CD8-positive, alpha-beta T cell (primary cell): ENCODE measurements at regions of chr14 and their contacts with region 1.

Region 1: GRCh38 chr14:90383075-90383730 is 13.6 kb upstream of the CALM1 start:
- DNase-seq: peak; percentile 94 to 99 (median 97)
- ATAC-seq: peak; percentile 77
- H3K4me3 ChIP-seq: peak overlapping the region; percentile 88 to 90
- H3K4me3 Mint-ChIP-seq: no peak overlapping the region
- H3K27ac ChIP-seq: peak overlapping the region; percentile 99 to 100
- H3K27ac Mint-ChIP-seq: no peak overlapping the region
- H3K4me1 ChIP-seq: peaks cover 23% of the 10 kb centered on the region
- H3K4me1 Mint-ChIP-seq: peaks cover 28% of the 10 kb centered on the region
- H3K27me3 ChIP-seq: no peaks in the 10 kb centered on the region
- H3K27me3 Mint-ChIP-seq: no peaks in the 10 kb centered on the region
- CTCF ChIP-seq: no peak

Region 2: DNA sequence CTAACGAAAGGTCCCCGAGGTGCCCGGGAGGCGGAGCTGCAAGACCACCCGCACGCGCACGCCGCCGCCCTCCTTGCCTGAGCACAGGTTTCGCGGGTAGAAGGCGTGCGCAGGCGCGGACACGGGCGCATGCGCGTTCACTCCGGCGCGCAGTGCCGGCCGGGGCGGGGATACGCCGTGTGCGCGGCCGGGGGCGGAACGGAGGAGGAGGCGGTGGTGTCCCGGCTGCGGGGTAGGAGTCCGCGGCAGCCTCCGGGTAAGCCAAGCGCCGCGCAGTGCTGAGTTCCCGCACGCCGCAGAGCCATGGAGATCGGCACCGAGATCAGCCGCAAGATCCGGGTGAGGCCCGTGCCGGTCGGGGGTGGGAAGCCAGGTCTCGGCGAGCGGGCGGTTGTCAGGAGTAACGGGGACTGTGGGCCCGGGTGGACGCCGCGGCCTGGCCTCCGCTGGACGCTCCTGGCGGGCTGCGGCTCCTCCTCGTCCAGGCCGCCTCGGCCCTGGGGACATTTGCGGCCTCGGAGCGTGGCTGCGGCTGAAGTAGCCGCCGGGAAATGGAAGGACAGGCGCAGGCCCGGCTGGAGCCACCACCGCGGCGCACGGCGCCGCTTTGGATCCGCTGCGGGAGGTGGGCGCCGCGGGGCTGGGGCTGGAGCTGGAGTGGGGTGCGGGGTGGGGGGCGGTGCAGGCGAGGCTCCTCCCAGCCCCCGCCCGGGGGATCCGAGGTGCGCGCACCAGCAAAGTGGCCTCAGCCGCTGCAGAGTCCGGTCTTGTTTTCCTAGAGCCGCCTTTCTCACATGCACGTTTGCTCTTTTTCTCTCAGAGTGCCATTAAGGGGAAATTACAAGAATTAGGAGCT is 1820.1 kb before region 1 on chr14 and contains the start of gene ZC3H14:
- CTCF ChIA-PET with region 1: no interaction called
- POLR2A ChIA-PET with region 1: no interaction called
- intact Hi-C with region 1: loop called (anchors 10 kb)
- DNase-seq: peak; percentile 69 to 94 (median 86)
- ATAC-seq: peak; percentile 95
- H3K4me3 ChIP-seq: peak within 1 kb of the TSS; percentile 75 to 91
- H3K4me3 Mint-ChIP-seq: peak within 1 kb of the TSS; percentile 96
- H3K27ac ChIP-seq: peak within 1 kb of the TSS; percentile 52 to 66
- H3K27ac Mint-ChIP-seq: peak within 1 kb of the TSS; percentile 91
- H3K4me1 ChIP-seq: peaks cover 20% of the 10 kb centered on the region
- H3K4me1 Mint-ChIP-seq: peaks cover 35% of the 10 kb centered on the region
- H3K27me3 ChIP-seq: no peaks in the 10 kb centered on the region
- H3K27me3 Mint-ChIP-seq: peaks cover 7% of the 10 kb centered on the region
- CTCF ChIP-seq: no peak
- total RNA-seq, gene ZC3H14: 36.3 to 39.3 TPM

Region 3: DNA sequence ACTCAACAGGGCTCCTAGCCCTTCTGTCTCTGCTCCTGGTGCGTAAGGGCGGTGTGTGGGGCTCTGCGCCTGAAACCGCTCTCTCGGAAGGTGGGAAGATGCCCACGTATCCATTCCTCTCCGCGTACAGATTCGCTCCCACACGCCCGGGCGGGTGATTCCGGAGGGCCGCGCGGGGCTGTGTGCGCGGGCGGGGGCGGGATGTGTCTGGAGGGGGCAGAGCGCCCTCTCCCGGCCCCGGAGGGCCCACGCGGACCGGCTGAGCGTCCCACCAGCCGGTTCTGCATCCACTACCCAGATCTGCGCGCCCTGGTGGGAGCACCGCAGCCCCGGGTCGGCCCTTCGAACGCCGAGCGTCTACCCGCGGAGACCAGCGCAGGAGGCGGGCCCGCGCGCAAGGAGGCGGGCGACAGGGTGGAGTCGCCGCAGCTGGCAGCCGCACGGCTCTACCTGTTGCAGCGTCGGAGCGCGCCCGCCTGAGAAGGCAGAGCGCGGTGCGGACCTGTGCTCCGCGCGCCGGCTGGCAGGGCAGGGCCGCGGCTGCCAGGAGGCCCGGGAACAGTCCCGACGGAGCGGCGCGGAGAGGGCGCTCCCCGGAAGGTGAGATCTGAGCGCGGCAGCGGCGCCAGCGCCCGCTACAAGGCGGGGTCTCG is 322.8 kb before region 1 on chr14:
- CTCF ChIA-PET with region 1: no interaction called
- POLR2A ChIA-PET with region 1: no interaction called
- intact Hi-C with region 1: no loop called
- DNase-seq: peak in 6 of 9 experiments; percentile 16 to 55 (median 26)
- ATAC-seq: peak; percentile 66
- H3K4me3 ChIP-seq: peak overlapping the region; percentile 29 to 35
- H3K4me3 Mint-ChIP-seq: peak overlapping the region; percentile 72
- H3K27ac ChIP-seq: no peak overlapping the region
- H3K27ac Mint-ChIP-seq: no peak overlapping the region
- H3K4me1 ChIP-seq: peaks cover 12% of the 10 kb centered on the region
- H3K4me1 Mint-ChIP-seq: peaks cover 26% of the 10 kb centered on the region
- H3K27me3 ChIP-seq: peaks cover 9% of the 10 kb centered on the region in 2 experiments
- H3K27me3 Mint-ChIP-seq: peaks cover 59% of the 10 kb centered on the region
- CTCF ChIP-seq: peak; percentile 20

Region 4: DNA sequence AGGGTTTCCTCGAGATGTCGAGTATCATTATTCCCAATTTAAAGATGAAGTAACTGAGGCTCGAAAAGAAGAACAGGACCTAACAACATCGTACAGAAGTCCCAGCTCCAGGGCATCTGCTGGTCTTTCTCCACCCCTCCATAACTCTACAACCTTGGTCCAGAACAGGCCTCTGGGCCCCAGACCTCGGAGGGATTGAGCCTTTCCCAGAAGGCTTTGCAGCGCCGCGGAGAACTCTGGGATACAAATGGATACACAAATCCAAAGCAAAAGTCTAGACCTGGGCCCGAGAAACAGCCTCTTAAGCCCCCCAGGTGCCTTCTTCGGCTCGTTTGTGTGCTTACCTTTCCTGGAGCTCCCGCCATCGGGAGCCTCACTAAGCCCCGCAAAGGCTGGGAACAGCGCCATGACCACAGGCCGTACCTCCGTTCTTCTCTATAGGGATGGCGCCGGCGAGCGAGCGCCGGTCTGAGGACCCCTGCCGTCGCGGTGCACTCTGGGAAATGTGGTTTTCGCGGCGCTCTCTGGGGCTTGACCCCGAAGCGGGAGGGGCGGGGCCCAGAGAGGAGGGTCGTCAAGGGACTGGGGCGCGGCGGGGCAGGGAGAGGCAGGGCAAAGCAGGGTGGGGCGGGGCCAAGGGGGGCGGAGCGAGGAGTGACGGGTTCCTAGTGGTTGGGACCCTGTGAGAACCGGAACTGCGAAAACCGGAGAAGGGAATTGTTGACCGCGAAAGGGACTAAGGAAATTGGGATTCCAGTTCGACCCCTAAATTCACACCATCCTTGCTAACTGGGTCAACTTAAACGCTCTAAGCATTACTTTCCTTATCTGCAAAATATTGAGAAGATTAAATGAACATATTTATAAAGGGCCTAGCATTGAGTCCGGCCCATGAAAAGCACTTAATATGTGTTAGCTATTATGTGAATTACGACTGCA is 51.4 kb before region 1 on chr14 and contains the start of gene NRDE2:
- CTCF ChIA-PET with region 1: no interaction called
- POLR2A ChIA-PET with region 1: interaction called, 14 read pairs
- intact Hi-C with region 1: loop called (anchors 1 to 2 kb)
- DNase-seq: peak; percentile 81 to 97 (median 93)
- ATAC-seq: peak; percentile 95
- H3K4me3 ChIP-seq: peak within 1 kb of the TSS; percentile 86 to 90
- H3K4me3 Mint-ChIP-seq: peak within 1 kb of the TSS; percentile 90
- H3K27ac ChIP-seq: peak within 1 kb of the TSS; percentile 63 to 88
- H3K27ac Mint-ChIP-seq: peak within 1 kb of the TSS; percentile 94
- H3K4me1 ChIP-seq: peaks cover 21% of the 10 kb centered on the region
- H3K4me1 Mint-ChIP-seq: peaks cover 32% of the 10 kb centered on the region
- H3K27me3 ChIP-seq: no peaks in the 10 kb centered on the region
- H3K27me3 Mint-ChIP-seq: peaks cover 11% of the 10 kb centered on the region
- CTCF ChIP-seq: no peak
- total RNA-seq, gene NRDE2: 22.8 to 23.0 TPM

Region 5: GRCh38 chr14:91510174-91511042 is 1127.2 kb after region 1 on chr14 and contains the start of gene PPP4R3A:
- CTCF ChIA-PET with region 1: no interaction called
- POLR2A ChIA-PET with region 1: interaction called, 8 read pairs
- intact Hi-C with region 1: loop called in 1 of 2 experiments (anchors 5 kb)
- DNase-seq: peak; percentile 84 to 99 (median 93)
- ATAC-seq: peak; percentile 86
- H3K4me3 ChIP-seq: peak within 1 kb of the TSS; percentile 48 to 96
- H3K4me3 Mint-ChIP-seq: peak within 1 kb of the TSS; percentile 100
- H3K27ac ChIP-seq: peak within 1 kb of the TSS; percentile 94 to 98
- H3K27ac Mint-ChIP-seq: peak within 1 kb of the TSS; percentile 100
- H3K4me1 ChIP-seq: peaks cover 26% of the 10 kb centered on the region
- H3K4me1 Mint-ChIP-seq: peaks cover 32% of the 10 kb centered on the region
- H3K27me3 ChIP-seq: no peaks in the 10 kb centered on the region
- H3K27me3 Mint-ChIP-seq: no peaks in the 10 kb centered on the region
- CTCF ChIP-seq: no peak
- total RNA-seq, gene PPP4R3A: 279 to 285 TPM